Endothelial cell of umbilical vein (primary cell): ENCODE measurements at regions of chr1 and their contacts with region 1.

Region 1: GRCh38 chr1:75265792-75266191 is 131.6 kb downstream of the LHX8 start:
- DNase-seq: peak; percentile 74
- H3K4me3 ChIP-seq: no peak overlapping the region
- H3K27ac ChIP-seq: no peak overlapping the region
- H3K4me1 ChIP-seq: no peaks in the 10 kb centered on the region
- H3K27me3 ChIP-seq: no peaks in the 10 kb centered on the region
- CTCF ChIP-seq: peak; percentile 47 to 50
- POLR2A ChIP-seq: no peak

Region 2: DNA sequence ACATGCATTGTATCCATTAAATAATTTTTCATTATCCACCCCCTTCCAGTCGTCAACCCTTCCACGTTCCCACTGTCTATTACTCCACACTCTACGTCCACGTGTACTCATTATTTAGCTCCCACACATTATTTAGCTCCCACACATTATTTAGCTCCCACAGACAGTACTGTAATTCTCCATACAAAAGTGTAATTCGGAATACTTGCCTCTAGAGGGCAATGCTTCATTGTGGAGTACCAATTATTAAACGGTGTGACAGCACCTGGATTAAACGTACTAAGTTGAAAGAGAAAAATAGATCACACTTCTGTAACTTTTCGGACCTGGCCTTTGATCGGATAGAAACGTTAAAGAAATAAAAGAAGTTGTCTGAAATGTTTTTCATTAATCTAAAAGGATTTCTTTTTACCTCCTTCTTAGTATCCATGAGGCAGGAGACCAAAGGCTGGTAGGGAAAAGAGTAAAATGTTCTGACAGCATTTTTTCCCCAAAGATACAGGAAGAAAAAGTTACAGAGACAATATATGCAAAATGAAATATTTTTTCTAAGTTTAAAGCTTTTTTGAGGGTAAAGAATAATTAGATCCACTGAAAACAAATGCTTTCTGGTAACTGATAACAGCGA is 32.4 kb before region 1 on chr1:
- CTCF ChIA-PET with region 1: interaction called, 27 read pairs
- POLR2A ChIA-PET with region 1: no interaction called
- dilution Hi-C with region 1: no loop called
- intact Hi-C with region 1: loop called (anchors 1 kb)
- DNase-seq: peak; percentile 66
- H3K4me3 ChIP-seq: no peak overlapping the region
- H3K27ac ChIP-seq: no peak overlapping the region
- H3K4me1 ChIP-seq: peaks cover 11% of the 10 kb centered on the region
- H3K27me3 ChIP-seq: no peaks in the 10 kb centered on the region
- CTCF ChIP-seq: peak; percentile 43 to 52
- POLR2A ChIP-seq: no peak

Region 3: GRCh38 chr1:75423616-75424015 is 157.8 kb after region 1 on chr1:
- CTCF ChIA-PET with region 1: interaction called, 13 read pairs
- POLR2A ChIA-PET with region 1: no interaction called
- dilution Hi-C with region 1: no loop called
- intact Hi-C with region 1: no loop called
- DNase-seq: peak; percentile 24
- H3K4me3 ChIP-seq: no peak overlapping the region
- H3K27ac ChIP-seq: no peak overlapping the region
- H3K4me1 ChIP-seq: no peaks in the 10 kb centered on the region
- H3K27me3 ChIP-seq: no peaks in the 10 kb centered on the region
- CTCF ChIP-seq: no peak
- POLR2A ChIP-seq: no peak

Region 4: GRCh38 chr1:75492011-75492410 is 226.2 kb after region 1 on chr1:
- CTCF ChIA-PET with region 1: interaction called, 5 read pairs
- POLR2A ChIA-PET with region 1: no interaction called
- dilution Hi-C with region 1: no loop called
- intact Hi-C with region 1: loop called (anchors 1 kb)
- DNase-seq: peak; percentile 82
- H3K4me3 ChIP-seq: no peak overlapping the region
- H3K27ac ChIP-seq: no peak overlapping the region
- H3K4me1 ChIP-seq: peaks cover 8% of the 10 kb centered on the region
- H3K27me3 ChIP-seq: no peaks in the 10 kb centered on the region
- CTCF ChIP-seq: no peak
- POLR2A ChIP-seq: no peak

Region 5: DNA sequence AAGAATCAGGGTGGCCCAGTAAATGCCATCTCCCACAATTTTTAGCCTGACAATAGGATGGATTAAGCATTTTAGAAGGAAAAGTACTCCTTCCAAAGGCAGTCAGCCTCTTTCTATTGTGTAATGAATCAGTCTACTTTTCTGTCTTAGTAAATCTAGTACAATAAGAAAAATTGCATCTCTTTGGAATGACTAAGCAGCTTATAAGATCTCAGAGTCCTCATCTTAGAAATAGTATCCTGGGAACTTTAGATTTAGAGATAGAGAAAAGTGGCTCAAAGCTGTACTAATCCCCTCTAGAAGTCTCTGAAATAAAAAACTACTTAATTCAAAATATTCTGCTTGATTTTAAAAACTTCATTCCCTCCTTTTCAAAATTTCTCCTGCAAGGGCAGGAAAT is 263.7 kb after region 1 on chr1:
- CTCF ChIA-PET with region 1: interaction called, 12 read pairs
- POLR2A ChIA-PET with region 1: no interaction called
- dilution Hi-C with region 1: no loop called
- intact Hi-C with region 1: loop called (anchors 5 kb)
- DNase-seq: peak; percentile 40
- H3K4me3 ChIP-seq: no peak overlapping the region
- H3K27ac ChIP-seq: no peak overlapping the region
- H3K4me1 ChIP-seq: peaks cover 29% of the 10 kb centered on the region
- H3K27me3 ChIP-seq: no peaks in the 10 kb centered on the region
- CTCF ChIP-seq: no peak
- POLR2A ChIP-seq: no peak

Region 6: GRCh38 chr1:75615613-75616435 is 350.0 kb after region 1 on chr1:
- CTCF ChIA-PET with region 1: interaction called, 69 read pairs
- POLR2A ChIA-PET with region 1: no interaction called
- dilution Hi-C with region 1: no loop called
- intact Hi-C with region 1: no loop called
- DNase-seq: peak; percentile 74
- H3K4me3 ChIP-seq: peak overlapping the region; percentile 80 to 84 (median 82)
- H3K27ac ChIP-seq: no peak overlapping the region
- H3K4me1 ChIP-seq: peaks cover 12% of the 10 kb centered on the region
- H3K27me3 ChIP-seq: peaks cover 0 to 3% of the 10 kb centered on the region in 2 experiments
- CTCF ChIP-seq: no peak
- POLR2A ChIP-seq: no peak

Region 7: GRCh38 chr1:75690547-75690946 is 424.8 kb after region 1 on chr1:
- CTCF ChIA-PET with region 1: no interaction called
- POLR2A ChIA-PET with region 1: no interaction called
- dilution Hi-C with region 1: no loop called
- intact Hi-C with region 1: no loop called
- DNase-seq: no peak
- H3K4me3 ChIP-seq: no peak overlapping the region
- H3K27ac ChIP-seq: no peak overlapping the region
- H3K4me1 ChIP-seq: no peaks in the 10 kb centered on the region
- H3K27me3 ChIP-seq: peaks cover 0 to 2% of the 10 kb centered on the region in 2 experiments
- CTCF ChIP-seq: no peak
- POLR2A ChIP-seq: no peak